Gastrocnemius medialis (tissue), 4 donors: ENCODE measurements at regions of chr15 and their contacts with region 1.

Region 1: DNA sequence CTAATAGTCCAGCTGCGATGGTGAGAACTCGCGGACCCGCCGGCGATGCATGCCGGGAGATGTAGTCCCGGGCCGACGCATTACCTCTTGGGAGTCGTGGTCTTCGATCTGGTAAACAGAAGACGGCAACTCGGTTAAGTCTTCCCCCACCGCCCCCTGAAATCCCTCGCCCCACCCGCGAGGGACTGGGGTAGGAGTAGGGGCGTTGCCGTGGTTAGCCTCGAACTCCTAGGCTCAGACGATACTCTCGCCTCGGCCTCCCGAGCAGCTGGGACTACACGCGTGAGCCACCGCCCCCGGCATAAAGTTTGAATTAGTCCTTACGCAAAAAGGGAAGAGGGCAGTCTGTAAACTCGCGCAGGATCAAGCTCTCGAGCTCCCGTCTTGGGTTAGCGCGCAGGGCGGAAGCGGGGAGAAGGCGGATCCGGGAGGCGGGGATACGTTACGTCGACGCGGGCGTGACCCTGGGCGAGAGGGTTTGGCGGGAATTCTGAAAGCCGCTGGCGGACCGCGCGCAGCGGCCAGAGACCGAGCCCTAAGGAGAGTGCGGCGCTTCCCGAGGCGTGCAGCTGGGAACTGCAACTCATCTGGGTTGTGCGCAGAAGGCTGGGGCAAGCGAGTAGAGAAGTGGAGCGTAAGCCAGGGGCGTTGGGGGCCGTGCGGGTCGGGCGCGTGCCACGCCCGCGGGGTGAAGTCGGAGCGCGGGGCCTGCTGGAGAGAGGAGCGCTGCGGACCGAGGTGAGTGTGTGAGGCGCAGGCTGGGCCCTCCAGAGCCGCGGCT is at the start of gene RAD51:
- DNase-seq: peak; percentile 80 to 86
- ATAC-seq: peak; percentile 98
- H3K4me3 ChIP-seq: peak within 1 kb of the TSS; percentile 92 to 99 (median 94)
- H3K27ac ChIP-seq: peak within 1 kb of the TSS; percentile 99 to 100 (median 100)
- H3K4me1 ChIP-seq: peaks cover 16 to 20% of the 10 kb centered on the region in 2 donors
- H3K27me3 ChIP-seq: no peaks in the 10 kb centered on the region
- CTCF ChIP-seq: no peak
- POLR2A ChIP-seq: peak; percentile 39 to 46
- total RNA-seq, gene RAD51: 0.56 to 0.75 (median 0.60) TPM in 3 of 4 donors, not detected in the other

Region 2: DNA sequence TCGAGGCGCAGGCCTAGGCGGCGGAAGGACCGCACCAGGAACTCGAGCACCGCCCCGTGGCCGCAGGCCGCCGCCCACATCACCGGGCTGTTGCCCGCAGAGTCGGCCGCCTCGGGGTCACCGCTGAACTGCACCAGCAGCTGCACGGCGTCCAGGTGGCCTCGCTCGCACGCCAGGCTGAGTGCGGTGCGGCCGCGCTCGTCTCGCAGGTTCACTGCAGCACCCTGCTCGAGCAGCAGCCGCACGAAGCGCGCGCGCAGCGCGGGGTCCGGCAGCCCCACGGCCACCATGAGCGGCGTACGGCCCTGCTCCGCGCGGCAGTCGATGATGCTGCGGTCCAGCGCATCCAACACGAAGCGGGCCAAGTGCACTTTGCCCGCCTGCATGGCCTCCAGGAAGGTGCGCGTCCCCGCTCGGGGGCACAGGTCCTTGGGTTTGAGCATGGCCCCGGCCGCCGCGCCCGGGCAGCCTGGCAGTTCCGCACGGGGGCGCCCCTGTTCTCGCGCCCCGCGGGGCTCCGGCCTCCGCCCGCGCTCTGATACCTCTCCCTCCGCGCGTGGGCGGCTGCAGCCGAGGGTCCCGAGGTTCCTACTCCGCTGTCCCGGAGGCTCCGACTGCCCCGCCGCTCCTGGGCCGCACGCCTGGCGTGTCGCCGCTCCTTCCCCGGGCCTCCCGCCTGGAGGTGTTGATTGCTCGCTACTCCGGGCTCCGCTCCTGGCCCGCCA is 412.6 kb before region 1 on chr15:
- in situ Hi-C with region 1: no loop called
- intact Hi-C with region 1: no loop called
- DNase-seq: no peak
- ATAC-seq: peak in 1 of 2 donors; percentile 44
- H3K4me3 ChIP-seq: peak overlapping the region; percentile 46 to 52 (median 49)
- H3K27ac ChIP-seq: no peak overlapping the region
- H3K4me1 ChIP-seq: peaks cover 3 to 19% of the 10 kb centered on the region in 2 donors
- H3K27me3 ChIP-seq: peaks cover 50 to 54% (median 50%) of the 10 kb centered on the region in 3 donors
- CTCF ChIP-seq: peak in 3 of 5 experiments; percentile 20 to 36 (median 32)
- POLR2A ChIP-seq: no peak

Region 3: DNA sequence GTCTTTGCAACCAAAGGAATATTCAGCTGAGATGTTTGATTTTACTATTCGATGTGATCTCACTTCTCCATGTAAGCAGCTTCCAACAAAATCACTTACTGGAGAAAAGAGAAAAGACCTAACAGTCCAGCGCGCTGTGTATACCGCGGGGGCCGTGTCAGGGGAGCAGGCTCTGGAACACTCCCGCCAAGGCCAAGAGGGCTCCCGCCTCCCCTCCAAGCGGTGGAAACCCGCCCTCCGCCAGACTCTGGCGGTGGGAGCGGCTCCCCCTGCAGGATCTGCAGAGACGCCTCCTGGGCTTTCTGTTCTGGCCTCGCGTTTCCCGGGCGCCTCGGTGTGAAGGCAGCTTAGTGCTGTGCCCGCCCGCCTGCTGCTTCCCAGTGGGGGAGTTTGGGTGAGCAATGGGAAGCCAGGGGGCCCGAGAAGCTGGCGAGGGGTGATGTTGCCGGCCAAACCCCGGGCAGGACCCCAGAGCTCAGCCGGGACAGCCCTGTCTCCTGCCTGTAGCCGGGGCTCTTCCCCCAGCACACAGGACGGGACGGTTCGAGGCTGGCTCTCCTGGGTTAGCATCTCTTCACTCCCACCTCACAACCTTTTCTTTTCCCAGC is 187.8 kb before region 1 on chr15:
- in situ Hi-C with region 1: loop called in 1 of 4 experiments (anchors 25 kb)
- intact Hi-C with region 1: no loop called
- DNase-seq: peak; percentile 42 to 56
- ATAC-seq: peak; percentile 53 to 71
- H3K4me3 ChIP-seq: peak overlapping the region; percentile 35 to 52 (median 44)
- H3K27ac ChIP-seq: peak overlapping the region in 2 of 4 donors; percentile 33 to 35
- H3K4me1 ChIP-seq: peaks cover 6 to 20% of the 10 kb centered on the region in 2 donors
- H3K27me3 ChIP-seq: no peaks in the 10 kb centered on the region
- CTCF ChIP-seq: peak; percentile 21 to 85 (median 48)
- POLR2A ChIP-seq: no peak

Region 4: DNA sequence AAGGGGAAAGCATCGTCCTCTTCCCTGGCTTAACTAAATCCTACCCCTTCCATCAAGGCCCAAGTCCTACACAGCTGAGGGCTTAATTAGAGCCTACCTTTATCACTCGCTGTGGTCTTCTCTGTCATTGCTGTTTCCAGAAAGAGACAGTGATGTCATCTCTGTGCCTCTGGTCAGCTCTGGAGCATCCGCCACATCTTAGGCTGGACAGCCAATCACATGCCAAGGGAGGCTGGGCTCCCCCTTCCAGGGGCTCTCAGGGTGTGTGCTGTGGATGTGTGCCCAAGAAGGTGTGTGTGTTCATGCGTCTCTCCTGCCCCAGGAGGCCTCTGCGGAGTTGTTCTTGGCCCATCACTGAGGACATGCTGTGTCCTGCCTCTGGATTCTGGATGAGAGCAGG is 181.3 kb before region 1 on chr15:
- in situ Hi-C with region 1: loop called in 1 of 4 experiments (anchors 25 kb)
- intact Hi-C with region 1: loop called (anchors 2 kb)
- DNase-seq: no peak
- ATAC-seq: no peak
- H3K4me3 ChIP-seq: no peak overlapping the region
- H3K27ac ChIP-seq: no peak overlapping the region
- H3K4me1 ChIP-seq: peaks cover 2 to 8% of the 10 kb centered on the region in 2 donors
- H3K27me3 ChIP-seq: no peaks in the 10 kb centered on the region
- CTCF ChIP-seq: no peak
- POLR2A ChIP-seq: no peak

Region 5: DNA sequence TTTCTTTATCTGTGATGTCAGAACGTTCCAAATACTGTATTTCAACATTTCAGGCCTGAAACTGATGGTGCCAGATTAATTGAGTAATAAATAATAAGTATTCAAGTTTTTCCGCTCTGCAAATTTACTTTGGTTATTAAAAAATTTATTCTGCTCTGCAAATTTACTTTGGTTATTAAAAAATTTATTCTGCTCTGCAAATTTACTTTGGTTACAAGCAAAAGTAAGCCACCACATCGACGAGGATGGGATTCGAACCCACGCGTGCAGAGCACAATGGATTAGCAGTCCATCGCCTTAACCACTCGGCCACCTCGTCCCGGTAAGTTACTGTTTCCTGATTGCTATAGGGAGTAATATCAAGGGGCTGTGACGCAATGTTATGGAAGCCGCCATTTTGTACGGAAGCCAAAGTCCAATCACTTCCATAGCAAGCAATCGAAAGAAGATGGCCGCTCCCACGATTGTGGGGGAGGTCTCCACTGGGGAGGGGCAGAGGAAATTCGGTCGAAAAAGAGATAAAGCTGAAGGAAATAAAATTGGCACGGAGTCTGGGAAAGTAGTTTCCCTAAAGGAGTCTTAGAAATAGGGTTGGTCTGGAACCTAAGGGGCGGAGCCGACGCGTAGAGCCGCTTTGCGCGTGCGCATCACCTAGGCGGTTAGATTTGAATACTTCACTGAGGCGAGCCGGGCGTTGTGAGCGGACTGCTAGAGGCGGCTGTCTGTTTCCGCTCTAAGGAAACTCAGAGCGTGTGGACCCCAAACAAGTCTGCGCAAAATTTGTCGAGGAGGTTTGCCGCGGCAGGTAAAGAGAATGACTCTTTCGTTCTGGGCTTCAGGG is 101.1 kb before region 1 on chr15 and contains the start of gene KNL1:
- in situ Hi-C with region 1: loop called in 1 of 4 experiments (anchors 5 kb)
- intact Hi-C with region 1: loop called (anchors 2 kb)
- DNase-seq: peak; percentile 83 to 91
- ATAC-seq: peak; percentile 97 to 98
- H3K4me3 ChIP-seq: peak within 1 kb of the TSS; percentile 72 to 88 (median 82)
- H3K27ac ChIP-seq: peak within 1 kb of the TSS; percentile 88 to 97 (median 93)
- H3K4me1 ChIP-seq: peaks cover 9% of the 10 kb centered on the region in 2 donors
- H3K27me3 ChIP-seq: no peaks in the 10 kb centered on the region
- CTCF ChIP-seq: no peak
- POLR2A ChIP-seq: no peak
- total RNA-seq, gene KNL1: 0.10 to 0.33 (median 0.33) TPM in 3 of 4 donors, not detected in the other

Region 6: GRCh38 chr15:40754883-40755811 is 60.3 kb after region 1 on chr15 and contains the start of gene RMDN3:
- in situ Hi-C with region 1: no loop called
- intact Hi-C with region 1: loop called (anchors 2 kb)
- DNase-seq: peak; percentile 78 to 88
- ATAC-seq: peak; percentile 90 to 93
- H3K4me3 ChIP-seq: peak within 1 kb of the TSS; percentile 90 to 100 (median 96)
- H3K27ac ChIP-seq: peak within 1 kb of the TSS; percentile 92 to 97 (median 95)
- H3K4me1 ChIP-seq: peaks cover 13 to 15% of the 10 kb centered on the region in 2 donors
- H3K27me3 ChIP-seq: no peaks in the 10 kb centered on the region
- CTCF ChIP-seq: no peak
- POLR2A ChIP-seq: peak; percentile 78 to 80
- total RNA-seq, gene RMDN3: 12.7 to 55.3 (median 19.6) TPM

Region 7: DNA sequence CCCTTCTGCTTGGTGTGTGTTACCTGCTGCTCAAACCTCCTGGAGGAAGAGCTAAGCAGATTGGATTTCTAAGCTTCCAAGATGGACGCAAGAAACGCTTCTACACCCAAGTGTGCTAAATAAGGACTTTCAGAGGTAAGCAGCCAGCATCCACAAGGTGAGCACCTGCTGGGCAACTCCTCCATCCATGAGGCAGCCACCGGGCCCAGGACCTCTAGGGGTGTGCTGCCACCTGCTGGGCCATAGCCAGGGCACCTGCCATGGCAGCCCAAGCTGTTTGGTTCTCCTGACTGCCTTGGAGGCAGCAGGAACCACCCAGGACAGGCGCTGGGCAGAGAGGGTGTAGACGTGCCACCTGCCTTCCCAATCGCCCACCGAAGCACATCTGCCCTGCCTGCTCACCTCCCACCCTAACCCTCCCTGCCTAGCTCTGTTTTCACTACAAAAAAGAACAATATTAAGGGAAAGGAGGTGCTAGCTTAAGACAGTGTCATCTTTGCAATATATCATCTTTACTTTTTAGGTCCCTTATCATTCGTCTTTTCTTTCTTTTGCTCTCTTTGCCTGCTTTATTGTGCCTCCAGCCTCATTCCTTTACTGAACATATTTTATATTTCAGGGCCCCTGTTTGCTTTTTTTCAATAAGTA is 87.8 kb after region 1 on chr15:
- in situ Hi-C with region 1: loop called in 1 of 4 experiments (anchors 25 kb)
- intact Hi-C with region 1: no loop called
- DNase-seq: peak in 1 of 2 donors; percentile 38
- ATAC-seq: peak in 1 of 2 donors; percentile 51
- H3K4me3 ChIP-seq: no peak overlapping the region
- H3K27ac ChIP-seq: no peak overlapping the region
- H3K4me1 ChIP-seq: peaks cover 0 to 11% of the 10 kb centered on the region in 2 donors
- H3K27me3 ChIP-seq: no peaks in the 10 kb centered on the region
- CTCF ChIP-seq: peak in 4 of 5 experiments; percentile 21 to 50 (median 44)
- POLR2A ChIP-seq: no peak

Region 8: GRCh38 chr15:40807028-40807887 is 112.4 kb after region 1 on chr15 and contains the starts of genes DNAJC17 and ZFYVE19:
- in situ Hi-C with region 1: no loop called
- intact Hi-C with region 1: loop called (anchors 1 kb)
- DNase-seq: peak; percentile 97
- ATAC-seq: peak; percentile 98 to 99
- H3K4me3 ChIP-seq: peak within 1 kb of the TSS; percentile 87 to 100 (median 94)
- H3K27ac ChIP-seq: peak within 1 kb of the TSS; percentile 96 to 100 (median 97)
- H3K4me1 ChIP-seq: peaks cover 19 to 34% of the 10 kb centered on the region in 2 donors
- H3K27me3 ChIP-seq: no peaks in the 10 kb centered on the region
- CTCF ChIP-seq: peak in 1 of 5 experiments; percentile 30
- POLR2A ChIP-seq: peak; percentile 62 to 66
- total RNA-seq, gene DNAJC17: 5.3 to 25.0 (median 11.4) TPM
- total RNA-seq, gene ZFYVE19: 11.4 to 18.9 (median 14.7) TPM